HCT116 (cell line): ENCODE measurements at regions of chr3 and their contacts with region 1.

Region 1: DNA sequence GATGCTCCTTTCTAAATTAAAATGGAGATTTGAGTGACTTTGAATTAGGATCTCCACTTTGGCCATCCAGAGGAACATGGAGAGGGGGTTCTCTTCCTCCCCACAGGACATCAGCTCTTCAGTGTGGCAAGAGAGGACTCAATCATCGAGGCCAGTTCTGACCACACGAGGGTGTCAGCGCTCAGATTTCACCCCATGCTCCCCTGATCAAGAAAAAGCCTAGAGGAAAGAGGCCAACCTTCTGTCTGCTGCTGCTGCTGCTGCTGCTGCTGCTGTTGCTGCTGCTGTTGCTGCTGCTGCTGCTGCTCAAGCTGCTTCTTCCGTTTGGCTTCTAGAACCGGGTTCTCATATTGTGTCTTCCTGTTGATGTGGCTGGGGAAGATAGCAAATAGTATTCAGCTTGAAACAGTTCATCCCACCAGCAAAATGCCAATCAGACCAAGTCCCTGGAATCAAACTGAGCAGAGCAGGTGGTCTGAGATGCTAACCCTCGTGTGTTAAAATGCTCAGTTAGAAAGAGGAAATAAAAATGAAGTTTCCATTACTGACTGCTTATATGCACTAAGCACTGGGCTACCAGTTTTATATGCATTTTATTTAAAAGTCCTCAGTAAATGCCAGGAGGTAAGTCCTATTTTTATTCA is 599.0 kb downstream of the MAGI1 start:
- DNase-seq: peak; percentile 6
- ATAC-seq: peak; percentile 92
- H3K4me3 ChIP-seq: no peak overlapping the region
- H3K27ac ChIP-seq: no peak overlapping the region
- H3K4me1 ChIP-seq: no peaks in the 10 kb centered on the region
- H3K27me3 ChIP-seq: no peaks in the 10 kb centered on the region
- CTCF ChIP-seq: peak; percentile 18 to 50 (median 49); a peak in 4 of 6 replicates
- POLR2A ChIP-seq: no peak
- RAD21 ChIP-seq: peak; percentile 53

Region 2: GRCh38 chr3:65342084-65342683 is 97.6 kb before region 1 on chr3:
- CTCF ChIA-PET with region 1: no interaction called
- POLR2A ChIA-PET with region 1: no interaction called
- RAD21 ChIA-PET with region 1: no interaction called
- intact Hi-C with region 1: loop called (anchors 2 kb)
- DNase-seq: peak; percentile 42
- ATAC-seq: peak; percentile 100
- H3K4me3 ChIP-seq: no peak overlapping the region
- H3K27ac ChIP-seq: no peak overlapping the region
- H3K4me1 ChIP-seq: no peaks in the 10 kb centered on the region
- H3K27me3 ChIP-seq: 0 out of 2 replicates have a peak, but pooled peaks cover 6% of the 10 kb centered on the region
- CTCF ChIP-seq: peak; percentile 45 to 87 (median 84); a peak in 5 of 6 replicates
- POLR2A ChIP-seq: no peak
- RAD21 ChIP-seq: peak; percentile 65

Region 3: DNA sequence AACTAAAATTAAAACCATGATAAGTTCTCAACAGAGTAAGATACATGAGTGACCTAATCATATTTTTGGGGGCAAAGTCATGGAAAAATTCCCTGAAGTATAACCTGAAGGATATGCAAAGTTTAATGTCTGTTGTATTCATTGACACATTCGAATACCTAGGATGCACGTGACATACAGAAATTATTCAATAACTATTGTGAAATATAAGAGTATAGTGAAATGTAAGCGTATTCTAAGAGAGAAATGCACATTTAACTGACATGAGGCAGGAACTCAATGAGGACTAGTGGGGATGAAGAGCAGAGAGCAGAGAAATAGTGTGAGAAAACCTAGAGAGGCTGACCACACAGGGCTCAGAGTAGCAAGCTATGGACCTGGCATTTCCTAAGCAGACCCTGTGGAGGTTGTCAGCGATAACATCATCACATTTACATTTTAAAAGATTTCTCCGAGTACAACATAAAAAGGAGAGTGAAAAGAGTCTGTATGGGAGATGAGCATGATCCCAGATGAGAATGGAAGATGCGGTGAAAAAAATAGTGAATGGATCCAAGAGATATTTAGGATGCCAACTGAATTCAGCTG is 10.2 kb after region 1 on chr3:
- CTCF ChIA-PET with region 1: no interaction called
- POLR2A ChIA-PET with region 1: no interaction called
- RAD21 ChIA-PET with region 1: no interaction called
- intact Hi-C with region 1: no loop called
- DNase-seq: no peak
- ATAC-seq: no peak
- H3K4me3 ChIP-seq: no peak overlapping the region
- H3K27ac ChIP-seq: no peak overlapping the region
- H3K4me1 ChIP-seq: no peaks in the 10 kb centered on the region
- H3K27me3 ChIP-seq: no peaks in the 10 kb centered on the region
- CTCF ChIP-seq: no peak
- POLR2A ChIP-seq: no peak
- RAD21 ChIP-seq: no peak

Region 4: GRCh38 chr3:65672871-65673815 is 233.4 kb after region 1 on chr3:
- CTCF ChIA-PET with region 1: interaction called, 7 read pairs
- POLR2A ChIA-PET with region 1: no interaction called
- RAD21 ChIA-PET with region 1: no interaction called
- intact Hi-C with region 1: loop called (anchors 1 kb)
- DNase-seq: peak; percentile 43
- ATAC-seq: peak; percentile 77
- H3K4me3 ChIP-seq: no peak overlapping the region
- H3K27ac ChIP-seq: no peak overlapping the region
- H3K4me1 ChIP-seq: no peaks in the 10 kb centered on the region
- H3K27me3 ChIP-seq: peaks cover 3% of the 10 kb centered on the region; the same call in 1 of the 2 replicates
- CTCF ChIP-seq: peak; percentile 37 to 94 (median 79); a peak in 5 of 6 replicates
- POLR2A ChIP-seq: no peak
- RAD21 ChIP-seq: peak; percentile 56

Region 5: GRCh38 chr3:65732051-65732935 is 292.5 kb after region 1 on chr3:
- CTCF ChIA-PET with region 1: interaction called, 3 read pairs
- POLR2A ChIA-PET with region 1: no interaction called
- RAD21 ChIA-PET with region 1: interaction called in 1 of 2 experiments, 3 read pairs
- intact Hi-C with region 1: loop called (anchors 5 kb)
- DNase-seq: peak; percentile 29
- ATAC-seq: peak; percentile 95
- H3K4me3 ChIP-seq: no peak overlapping the region
- H3K27ac ChIP-seq: no peak overlapping the region
- H3K4me1 ChIP-seq: no peaks in the 10 kb centered on the region
- H3K27me3 ChIP-seq: no peaks in the 10 kb centered on the region
- CTCF ChIP-seq: peak; percentile 53 to 84 (median 75); a peak in 5 of 6 replicates
- POLR2A ChIP-seq: no peak
- RAD21 ChIP-seq: peak; percentile 62

Region 6: GRCh38 chr3:65751123-65751700 is 311.4 kb after region 1 on chr3:
- CTCF ChIA-PET with region 1: interaction called, 11 read pairs
- POLR2A ChIA-PET with region 1: no interaction called
- RAD21 ChIA-PET with region 1: interaction called in 1 of 2 experiments, 5 read pairs
- intact Hi-C with region 1: no loop called
- DNase-seq: peak; percentile 3
- ATAC-seq: peak; percentile 88
- H3K4me3 ChIP-seq: no peak overlapping the region
- H3K27ac ChIP-seq: no peak overlapping the region
- H3K4me1 ChIP-seq: no peaks in the 10 kb centered on the region
- H3K27me3 ChIP-seq: no peaks in the 10 kb centered on the region
- CTCF ChIP-seq: peak; percentile 21 to 76 (median 74); a peak in 4 of 6 replicates
- POLR2A ChIP-seq: no peak
- RAD21 ChIP-seq: peak; percentile 47